GM13977 (cell line): ENCODE measurements at regions of chr5 and their contacts with region 1.

Region 1: DNA sequence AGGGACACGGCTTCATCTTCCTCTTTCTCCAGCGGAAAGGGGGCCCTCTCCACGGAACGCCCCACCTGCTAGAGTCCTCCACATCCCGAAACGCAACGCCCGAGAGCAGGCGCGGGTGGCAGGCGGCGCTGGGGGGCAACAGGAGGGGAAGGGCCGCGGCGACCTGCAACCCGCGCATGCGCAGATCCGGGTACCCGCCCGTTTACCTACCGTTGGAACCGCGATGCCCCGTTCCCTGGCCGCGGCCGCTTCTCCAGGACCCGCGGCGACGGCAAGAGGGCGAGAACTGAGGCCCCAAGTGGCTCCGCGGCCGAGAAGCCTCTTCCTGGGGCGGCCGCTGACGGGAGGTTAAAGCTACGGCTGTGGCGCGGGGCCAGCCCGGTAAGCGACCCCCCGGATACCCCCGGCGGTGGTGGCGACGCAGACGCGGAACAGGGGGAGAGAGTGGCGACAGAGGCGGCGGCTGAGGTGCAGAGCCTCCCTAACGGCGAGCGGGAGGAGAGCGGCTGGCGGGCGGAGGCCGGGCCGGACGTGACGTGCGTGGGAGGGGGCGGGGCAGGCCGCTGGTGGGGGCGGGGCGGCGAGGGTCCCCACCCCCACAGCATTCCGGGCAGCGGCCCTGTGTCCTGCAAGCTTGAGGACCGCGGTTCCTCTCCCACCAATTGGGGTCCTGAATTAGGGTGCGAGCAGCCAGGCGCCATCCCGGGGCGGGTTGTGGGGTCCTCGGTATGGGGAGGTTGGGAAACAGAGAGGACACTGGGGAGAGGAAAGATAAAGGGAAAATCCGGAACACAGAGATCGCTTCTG is at the start of gene FAM13B:
- DNase-seq: peak; percentile 90
- CTCF ChIP-seq: no peak

Region 2: GRCh38 chr5:137594717-137595116 is 438.1 kb before region 1 on chr5:
- in situ Hi-C with region 1: no loop called
- DNase-seq: no peak
- CTCF ChIP-seq: no peak

Region 3: GRCh38 chr5:138065102-138065501 is 32.3 kb after region 1 on chr5:
- in situ Hi-C with region 1: loop called (anchors 5 kb)
- DNase-seq: no peak
- CTCF ChIP-seq: peak; percentile 56